ENCODE measurements at regions of chr7 and their contacts with region 1.

Region 1: DNA sequence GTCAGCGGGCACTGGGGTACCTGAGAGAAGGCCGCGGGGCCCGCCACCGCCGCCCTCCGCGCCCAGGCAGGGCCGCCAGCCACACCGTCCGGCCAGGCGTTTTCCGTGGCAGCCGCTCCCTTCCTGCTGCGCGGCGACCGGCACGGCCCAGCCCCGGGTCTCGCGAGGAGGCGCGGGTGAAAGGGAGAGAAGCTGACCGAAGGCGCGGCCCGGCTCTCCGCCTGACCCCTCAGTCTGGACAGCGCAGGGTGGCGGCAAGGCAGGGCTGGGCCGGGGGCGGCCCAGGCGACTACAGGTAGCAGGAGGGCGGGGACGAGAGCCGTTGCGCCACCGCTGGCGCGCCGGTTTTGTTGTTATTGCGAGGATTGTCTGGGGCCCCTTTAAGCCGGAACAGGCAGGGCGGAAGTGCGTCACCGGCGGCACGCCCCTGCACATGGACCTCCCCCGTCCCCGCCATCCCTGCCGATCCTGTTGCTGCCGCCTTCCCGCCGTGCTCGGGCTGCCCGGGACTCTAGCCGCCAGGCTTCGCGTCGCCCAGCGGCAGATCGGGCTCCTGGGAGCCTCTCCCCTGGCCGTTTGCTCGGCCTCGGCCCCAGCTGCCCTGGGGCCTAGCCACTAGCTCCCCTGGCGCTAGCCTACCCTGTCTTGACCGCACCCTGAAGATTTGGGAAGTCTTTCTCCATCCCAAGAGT is at the start of gene HERPUD2:
- DNase-seq: peak; percentile 86
- ATAC-seq: peak; percentile 88
- H3K4me3 ChIP-seq: peak within 1 kb of the TSS; percentile 83
- H3K27ac ChIP-seq: peak within 1 kb of the TSS; percentile 87
- H3K4me1 ChIP-seq: peaks cover 12% of the 10 kb centered on the region
- H3K27me3 ChIP-seq: no peaks in the 10 kb centered on the region
- CTCF ChIP-seq: no peak
- POLR2A ChIP-seq: peak; percentile 85
- RAD21 ChIP-seq: no peak
- total RNA-seq, gene HERPUD2: 18.3 and 22.2 TPM in 2 replicates

Region 2: GRCh38 chr7:35647171-35647574 is 47.8 kb before region 1 on chr7:
- CTCF ChIA-PET with region 1: no interaction called
- POLR2A ChIA-PET with region 1: no interaction called
- dilution Hi-C with region 1: no loop called
- in situ Hi-C with region 1: no loop called
- intact Hi-C with region 1: loop called (anchors 5 kb)
- DNase-seq: peak; percentile 36
- ATAC-seq: peak; percentile 69
- H3K4me3 ChIP-seq: no peak overlapping the region
- H3K27ac ChIP-seq: no peak overlapping the region
- H3K4me1 ChIP-seq: peaks cover 3% of the 10 kb centered on the region; the same call in 1 of the 2 replicates
- H3K27me3 ChIP-seq: no peaks in the 10 kb centered on the region
- CTCF ChIP-seq: no peak
- POLR2A ChIP-seq: no peak
- RAD21 ChIP-seq: no peak

Measured in IMR-90 (cell line).